HepG2 (cell line): ENCODE measurements at regions of chr6 and their contacts with region 1.

Region 1: DNA sequence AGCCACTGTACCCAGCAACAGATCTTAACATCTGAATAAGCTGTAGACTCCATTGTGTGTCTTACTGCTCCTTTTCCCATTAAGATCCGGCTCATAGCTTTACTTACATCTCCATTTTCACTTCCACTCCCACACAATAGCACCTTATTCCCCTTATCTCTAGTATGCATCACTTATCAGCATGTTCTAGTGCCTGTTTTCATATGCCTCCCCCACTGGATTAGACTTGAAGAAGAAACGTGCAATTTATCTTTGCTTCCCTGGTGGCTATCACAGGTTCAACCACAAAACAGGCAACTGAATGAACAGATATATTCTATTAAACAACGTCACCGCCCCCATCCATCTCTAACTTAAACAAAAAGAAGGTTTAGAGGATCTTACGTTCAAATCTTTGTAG is 12.1 kb downstream of the SSR1 start:
- DNase-seq: no peak
- ATAC-seq: no peak
- H3K4me3 ChIP-seq: no peak overlapping the region
- H3K27ac ChIP-seq: no peak overlapping the region
- H3K4me1 ChIP-seq: peaks cover 9% of the 10 kb centered on the region; the same call in 1 of the 2 replicates
- H3K27me3 ChIP-seq: no peaks in the 10 kb centered on the region
- CTCF ChIP-seq: no peak
- EP300 ChIP-seq: no peak
- POLR2A ChIP-seq: no peak
- RAD21 ChIP-seq: no peak

Region 2: GRCh38 chr6:7401075-7401474 is 100.1 kb after region 1 on chr6:
- CTCF ChIA-PET with region 1: no interaction called
- POLR2A ChIA-PET with region 1: no interaction called
- in situ Hi-C with region 1: loop called (anchors 10 kb)
- intact Hi-C with region 1: no loop called
- DNase-seq: no peak
- ATAC-seq: no peak
- H3K4me3 ChIP-seq: no peak overlapping the region
- H3K27ac ChIP-seq: no peak overlapping the region
- H3K4me1 ChIP-seq: no peaks in the 10 kb centered on the region
- H3K27me3 ChIP-seq: no peaks in the 10 kb centered on the region
- CTCF ChIP-seq: no peak
- EP300 ChIP-seq: no peak
- POLR2A ChIP-seq: no peak
- RAD21 ChIP-seq: no peak